Gastrocnemius medialis (tissue), 4 donors: ENCODE measurements at regions of chr5 and their contacts with region 1.

Region 1: DNA sequence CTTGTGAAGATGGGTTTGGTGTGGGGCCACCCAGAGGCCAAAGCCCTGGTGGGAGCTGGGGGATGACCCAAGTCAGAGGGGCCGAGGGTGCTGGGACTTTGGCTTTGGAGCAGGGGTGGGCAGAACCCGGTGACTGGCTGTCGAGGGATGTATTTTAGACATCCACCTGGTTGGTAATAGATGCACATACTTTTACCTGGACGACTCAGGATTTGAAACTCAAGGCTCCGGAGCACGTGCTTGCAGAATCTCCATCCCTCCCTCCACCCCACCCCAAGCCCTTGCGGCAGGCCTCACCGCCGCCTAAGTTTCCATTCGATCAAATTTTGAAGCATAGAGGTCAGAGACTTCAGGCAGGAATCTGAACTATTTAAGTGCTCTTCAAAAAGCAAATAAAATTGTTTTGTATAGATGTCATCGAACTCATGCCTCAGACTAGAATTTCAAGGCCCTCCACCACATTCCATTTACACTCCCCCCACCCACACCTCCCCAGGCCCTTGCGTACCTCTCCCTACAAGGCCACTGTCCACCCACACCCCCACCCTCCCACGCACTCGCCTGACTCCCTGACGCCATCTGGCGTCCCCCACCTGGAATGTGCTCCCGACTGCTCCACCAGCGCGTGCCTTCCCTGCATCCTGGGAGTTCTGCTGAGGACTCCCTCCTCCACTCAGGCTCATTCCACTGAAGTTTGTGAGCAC is 56.6 kb upstream of the RPL26L1 start:
- DNase-seq: peak; percentile 69 to 83
- ATAC-seq: peak; percentile 37 to 51
- H3K4me3 ChIP-seq: no peak overlapping the region
- H3K27ac ChIP-seq: peak overlapping the region; percentile 85 to 94 (median 92)
- H3K4me1 ChIP-seq: peaks cover 63 to 84% of the 10 kb centered on the region in 2 donors
- H3K27me3 ChIP-seq: no peaks in the 10 kb centered on the region
- CTCF ChIP-seq: peak; percentile 50 to 77 (median 63)
- POLR2A ChIP-seq: no peak

Region 2: DNA sequence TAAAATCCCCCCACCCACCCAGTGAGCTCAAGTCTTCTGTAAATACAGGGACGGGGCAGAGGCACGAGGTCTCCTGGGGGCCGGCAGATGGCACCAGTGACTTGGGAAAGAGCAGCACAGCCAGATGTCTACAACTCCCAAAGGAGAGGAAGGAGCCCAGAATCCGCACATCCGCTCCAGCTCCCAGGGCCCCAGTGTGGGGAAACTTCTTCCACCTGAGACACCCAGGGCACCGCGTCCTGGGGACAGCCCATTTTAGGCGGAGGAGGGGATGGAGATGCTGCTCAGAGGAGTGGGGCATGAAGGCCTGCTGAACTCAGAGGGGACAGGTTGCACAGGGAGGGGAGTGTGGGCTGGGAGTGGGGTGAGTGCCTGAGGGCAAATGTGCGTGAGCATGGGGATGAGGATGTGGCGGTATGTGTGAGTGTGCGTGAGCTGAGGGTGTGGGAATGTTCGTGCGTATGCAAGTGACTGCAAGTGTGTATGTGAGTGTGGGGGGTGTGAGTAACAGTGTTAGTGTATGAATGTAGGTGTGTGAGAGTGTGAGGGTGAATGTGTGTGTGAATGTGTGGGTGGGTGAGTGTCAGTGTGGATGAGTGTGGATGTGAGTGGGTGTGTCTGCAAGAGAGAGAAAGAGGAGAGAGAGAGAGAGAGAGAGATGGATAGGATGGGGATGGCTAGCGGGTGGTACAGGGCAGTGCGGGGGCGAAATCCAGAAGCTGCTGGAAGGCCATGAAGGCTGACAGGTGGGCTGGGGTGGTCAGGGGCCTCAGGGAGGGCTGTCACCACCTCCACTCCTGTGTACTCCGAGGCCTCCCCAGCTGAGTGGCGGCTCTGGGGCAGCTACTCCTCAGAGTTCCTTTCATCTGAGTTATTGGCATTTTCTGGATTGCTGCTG is 195.1 kb before region 1 on chr5:
- in situ Hi-C with region 1: no loop called
- intact Hi-C with region 1: no loop called
- DNase-seq: no peak
- ATAC-seq: peak in 1 of 2 donors; percentile 23
- H3K4me3 ChIP-seq: no peak overlapping the region
- H3K27ac ChIP-seq: no peak overlapping the region
- H3K4me1 ChIP-seq: no peaks in the 10 kb centered on the region
- H3K27me3 ChIP-seq: no peaks in the 10 kb centered on the region
- CTCF ChIP-seq: peak in 2 of 5 experiments; percentile 9 to 16
- POLR2A ChIP-seq: no peak

Region 3: DNA sequence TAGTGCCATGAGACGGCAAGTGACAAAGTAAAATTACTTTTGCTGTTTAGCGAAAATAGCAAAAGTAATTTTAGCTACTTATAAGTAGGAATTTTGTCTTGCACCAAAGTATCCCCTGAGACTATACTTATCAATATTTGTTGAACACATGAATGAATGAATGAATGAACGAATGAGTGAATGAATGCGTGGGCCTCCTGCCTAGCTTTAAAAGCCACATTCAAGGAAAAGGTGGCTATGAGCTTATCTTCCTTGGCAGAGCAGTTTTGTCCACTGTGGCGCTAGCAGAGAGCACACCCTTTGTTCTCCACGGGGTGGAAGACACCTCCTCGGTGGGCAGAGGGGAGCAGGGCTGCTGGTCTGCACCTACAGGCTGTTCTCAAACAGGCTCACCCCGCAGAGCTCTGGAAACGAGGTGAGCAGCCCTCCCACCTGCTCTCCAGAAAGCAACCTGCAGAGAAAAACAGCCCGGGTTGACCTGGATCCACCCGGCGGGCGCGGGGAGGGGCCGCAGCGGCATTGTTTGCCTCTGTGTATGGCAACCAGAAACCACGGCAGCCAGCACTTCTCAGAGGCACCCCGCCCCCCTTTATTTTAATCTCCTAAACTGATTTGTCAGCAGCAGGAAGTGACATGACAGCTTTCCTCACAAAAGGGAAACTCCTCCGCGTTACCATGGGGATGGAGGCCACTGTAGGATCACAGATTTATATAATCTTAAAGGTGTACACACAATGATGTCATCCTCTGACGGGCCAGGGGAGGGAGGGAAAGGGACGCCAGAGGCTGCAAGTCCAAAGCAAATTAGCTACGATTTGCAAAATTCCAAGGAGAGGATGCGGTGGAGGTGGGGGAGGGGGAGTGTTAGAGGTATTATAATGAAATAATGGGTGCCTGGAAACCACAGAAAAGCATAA is 137.5 kb before region 1 on chr5:
- in situ Hi-C with region 1: no loop called
- intact Hi-C with region 1: loop called (anchors 1 kb)
- DNase-seq: peak; percentile 91 to 95
- ATAC-seq: peak; percentile 53 to 60
- H3K4me3 ChIP-seq: peak overlapping the region; percentile 66 to 98 (median 83)
- H3K27ac ChIP-seq: peak overlapping the region; percentile 96 to 99 (median 96)
- H3K4me1 ChIP-seq: peaks cover 19 to 22% of the 10 kb centered on the region in 2 donors
- H3K27me3 ChIP-seq: no peaks in the 10 kb centered on the region
- CTCF ChIP-seq: peak in 2 of 5 experiments; percentile 14 to 28
- POLR2A ChIP-seq: no peak

Region 4: DNA sequence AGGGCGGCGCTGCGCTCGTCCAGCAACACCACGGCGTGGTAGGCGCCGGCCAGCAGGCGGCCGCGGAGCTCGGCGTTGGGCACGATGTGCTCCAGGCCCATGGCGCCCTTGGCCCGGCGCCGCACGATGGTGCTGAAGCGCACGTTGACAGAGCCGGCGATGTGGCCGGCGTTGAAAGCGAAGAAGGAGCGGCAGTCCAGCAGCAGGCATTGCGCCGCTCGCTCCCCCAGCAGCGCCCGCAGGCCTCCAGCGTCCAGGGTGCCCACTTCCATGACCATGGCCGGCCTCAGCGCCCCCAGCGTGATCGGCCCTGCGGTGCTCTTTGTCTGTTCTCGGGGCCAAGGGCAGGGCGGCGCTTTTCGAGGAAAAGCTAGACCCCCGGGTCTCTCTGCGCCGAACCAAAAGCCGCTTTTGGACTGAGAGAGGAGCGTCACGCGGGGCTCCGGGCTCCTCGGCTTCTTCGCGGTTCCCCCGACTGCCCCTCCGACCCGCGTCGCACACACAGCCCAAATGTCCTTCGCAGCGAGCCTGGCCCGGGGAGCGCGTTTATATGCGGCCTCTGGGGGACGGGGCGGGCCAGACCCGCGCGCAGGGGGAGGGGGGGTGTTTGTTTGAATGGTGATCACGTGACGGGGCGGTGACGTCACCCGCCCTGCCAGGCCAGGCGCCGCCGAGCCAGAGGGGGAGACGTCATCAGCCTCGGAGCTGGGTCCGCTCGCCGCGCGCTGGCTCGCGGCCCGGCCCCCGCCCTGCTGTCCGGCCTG is 131.8 kb before region 1 on chr5 and contains the start of gene DUSP1:
- in situ Hi-C with region 1: no loop called
- intact Hi-C with region 1: loop called (anchors 1 kb)
- DNase-seq: peak; percentile 99
- ATAC-seq: peak; percentile 34 to 42
- H3K4me3 ChIP-seq: peak within 1 kb of the TSS; percentile 66 to 98 (median 83)
- H3K27ac ChIP-seq: peak within 1 kb of the TSS; percentile 96 to 99 (median 96)
- H3K4me1 ChIP-seq: peaks cover 39 to 42% of the 10 kb centered on the region in 2 donors
- H3K27me3 ChIP-seq: no peaks in the 10 kb centered on the region
- CTCF ChIP-seq: peak; percentile 32 to 77 (median 40)
- POLR2A ChIP-seq: peak in 1 of 2 donors; percentile 100
- total RNA-seq, gene DUSP1: 345 to 1,004 (median 793) TPM

Region 5: DNA sequence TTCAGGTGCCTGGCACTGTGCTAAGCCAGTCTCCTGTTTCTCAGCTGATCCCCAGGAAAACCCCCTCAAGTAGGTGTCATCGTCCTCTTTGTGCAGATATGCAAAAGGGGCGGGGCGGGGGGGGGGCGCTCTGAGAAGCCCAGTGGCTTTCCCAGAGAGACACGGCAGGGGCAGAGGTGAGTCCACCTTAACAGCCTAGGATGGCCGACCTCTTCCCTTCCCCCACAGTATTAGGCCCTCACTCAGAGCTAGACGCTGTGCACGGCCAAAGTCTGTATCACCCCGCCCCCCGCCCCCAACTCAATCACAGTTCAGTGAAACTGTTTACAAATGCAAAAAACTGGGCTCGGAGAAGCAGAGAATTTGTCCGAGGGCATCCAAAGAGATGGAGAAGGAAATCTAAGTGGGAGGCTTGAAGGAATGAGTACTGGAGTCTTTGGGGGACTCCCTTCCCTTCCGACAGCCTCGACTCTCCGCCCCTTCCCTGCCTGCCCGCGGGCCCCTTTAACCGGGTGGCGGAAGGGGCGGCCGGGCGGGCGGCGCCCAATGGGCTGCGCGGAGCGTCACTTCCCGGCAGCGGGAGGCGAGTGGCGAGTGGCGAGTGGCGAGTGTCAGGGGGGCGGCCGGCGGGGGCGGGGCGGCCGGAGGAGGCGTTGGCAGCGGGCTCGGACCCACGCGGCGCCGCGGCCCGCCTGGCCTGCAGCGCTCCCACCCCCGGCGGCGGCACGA is 68.8 kb before region 1 on chr5 and contains the start of gene ERGIC1:
- in situ Hi-C with region 1: loop called in 1 of 4 experiments (anchors 10 kb)
- intact Hi-C with region 1: loop called (anchors 2 kb)
- DNase-seq: peak; percentile 81 to 86
- ATAC-seq: peak; percentile 83 to 85
- H3K4me3 ChIP-seq: peak within 1 kb of the TSS; percentile 71 to 97 (median 86)
- H3K27ac ChIP-seq: peak within 1 kb of the TSS; percentile 83 to 93 (median 87)
- H3K4me1 ChIP-seq: peaks cover 30 to 34% of the 10 kb centered on the region in 2 donors
- H3K27me3 ChIP-seq: no peaks in the 10 kb centered on the region
- CTCF ChIP-seq: peak in 1 of 5 experiments; percentile 20
- POLR2A ChIP-seq: peak; percentile 83 to 93
- total RNA-seq, gene ERGIC1: 54.4 to 108 (median 88.0) TPM

Region 6: DNA sequence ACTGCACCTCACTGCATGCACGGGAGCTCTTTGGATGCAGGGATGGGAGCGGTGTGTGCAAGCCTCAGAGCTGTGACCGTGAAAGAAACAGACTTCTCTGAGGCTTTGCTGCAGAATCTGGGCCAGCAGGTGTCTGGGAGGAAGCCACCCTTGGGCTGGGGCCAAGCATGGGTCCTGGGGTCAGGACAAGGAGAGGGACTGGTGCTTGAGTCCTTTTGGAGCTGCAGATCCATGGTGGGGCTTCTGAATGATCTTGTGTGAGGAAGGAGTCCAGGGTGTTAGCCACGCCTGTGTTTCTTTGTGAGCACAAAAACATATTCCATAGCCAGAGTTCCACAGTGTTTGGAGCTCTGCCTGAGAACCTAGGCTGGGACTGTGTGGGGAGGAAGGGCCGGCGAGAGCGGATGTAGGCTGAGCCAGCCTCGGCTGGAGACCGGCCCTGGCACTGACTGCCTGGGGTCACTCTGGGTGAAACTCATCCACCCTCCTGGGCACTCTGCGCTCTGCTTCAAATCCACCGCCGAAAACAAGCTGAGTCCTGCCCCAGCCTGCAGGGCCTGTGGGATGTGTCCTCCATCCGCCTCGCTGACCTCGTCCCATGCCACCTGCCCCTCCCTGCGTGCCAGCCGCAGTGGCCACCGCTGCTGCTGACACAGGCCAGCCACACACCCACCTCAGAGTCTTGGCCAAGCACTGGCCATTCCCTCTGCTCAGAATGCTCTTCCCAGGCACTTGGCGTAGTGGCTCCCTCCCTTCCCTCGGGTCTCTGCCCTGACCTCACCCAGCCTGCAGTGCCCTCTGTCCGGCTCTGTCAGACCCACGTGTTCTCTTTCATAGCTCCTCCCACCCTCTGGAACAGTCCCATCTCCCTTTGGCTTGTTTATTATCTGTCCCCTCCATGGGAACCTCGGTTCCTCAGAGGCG is 41.9 kb before region 1 on chr5:
- in situ Hi-C with region 1: no loop called
- intact Hi-C with region 1: loop called (anchors 1 kb)
- DNase-seq: peak; percentile 93 to 99
- ATAC-seq: peak; percentile 68 to 82
- H3K4me3 ChIP-seq: peak overlapping the region; percentile 9 to 40 (median 24)
- H3K27ac ChIP-seq: peak overlapping the region; percentile 85 to 98 (median 94)
- H3K4me1 ChIP-seq: peaks cover 81% of the 10 kb centered on the region in 2 donors
- H3K27me3 ChIP-seq: no peaks in the 10 kb centered on the region
- CTCF ChIP-seq: no peak
- POLR2A ChIP-seq: peak; percentile 42 to 69

Region 7: DNA sequence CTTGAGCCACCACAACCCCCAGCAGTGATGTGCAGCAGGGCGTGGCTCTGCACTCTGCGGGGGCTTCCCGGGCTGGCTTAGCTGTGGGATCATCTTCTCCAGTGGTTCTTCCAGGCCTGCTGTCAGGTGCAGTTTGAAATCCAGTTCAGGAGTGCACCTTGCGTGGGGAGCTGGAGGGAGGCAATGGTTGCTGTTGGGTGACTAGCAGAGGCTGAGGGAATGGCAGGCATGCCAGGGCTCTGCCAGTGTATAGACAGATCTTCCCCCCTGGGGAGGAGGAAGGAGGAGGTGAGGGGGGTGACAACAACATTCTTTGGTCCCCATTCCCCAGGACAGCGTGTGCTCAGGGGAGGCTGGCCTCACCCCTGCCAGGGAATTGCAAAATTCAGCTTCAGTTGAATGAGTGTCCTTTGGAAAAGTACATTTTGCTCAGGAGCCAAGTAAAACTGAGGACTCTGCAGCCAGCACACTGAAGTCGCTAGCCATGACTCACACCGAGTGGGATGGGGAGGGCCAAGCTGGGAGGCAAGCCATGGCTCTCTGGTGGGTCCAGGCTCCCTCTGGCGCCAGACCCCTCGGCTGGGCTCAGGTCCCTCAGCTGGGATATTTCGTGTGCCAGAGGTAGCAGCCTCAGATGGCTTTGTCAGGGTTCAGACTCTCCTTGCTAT is 33.6 kb before region 1 on chr5:
- in situ Hi-C with region 1: no loop called
- intact Hi-C with region 1: loop called (anchors 1 kb)
- DNase-seq: peak; percentile 94 to 97
- ATAC-seq: peak; percentile 65 to 67
- H3K4me3 ChIP-seq: peak overlapping the region in 3 of 4 donors; percentile 6 to 23 (median 18)
- H3K27ac ChIP-seq: peak overlapping the region; percentile 85 to 98 (median 94)
- H3K4me1 ChIP-seq: peaks cover 93 to 95% of the 10 kb centered on the region in 2 donors
- H3K27me3 ChIP-seq: no peaks in the 10 kb centered on the region
- CTCF ChIP-seq: peak in 4 of 5 experiments; percentile 41 to 52 (median 45)
- POLR2A ChIP-seq: peak; percentile 9 to 68